MCF 10A (cell line): ENCODE measurements at regions of chr11 and their contacts with region 1.

Region 1: DNA sequence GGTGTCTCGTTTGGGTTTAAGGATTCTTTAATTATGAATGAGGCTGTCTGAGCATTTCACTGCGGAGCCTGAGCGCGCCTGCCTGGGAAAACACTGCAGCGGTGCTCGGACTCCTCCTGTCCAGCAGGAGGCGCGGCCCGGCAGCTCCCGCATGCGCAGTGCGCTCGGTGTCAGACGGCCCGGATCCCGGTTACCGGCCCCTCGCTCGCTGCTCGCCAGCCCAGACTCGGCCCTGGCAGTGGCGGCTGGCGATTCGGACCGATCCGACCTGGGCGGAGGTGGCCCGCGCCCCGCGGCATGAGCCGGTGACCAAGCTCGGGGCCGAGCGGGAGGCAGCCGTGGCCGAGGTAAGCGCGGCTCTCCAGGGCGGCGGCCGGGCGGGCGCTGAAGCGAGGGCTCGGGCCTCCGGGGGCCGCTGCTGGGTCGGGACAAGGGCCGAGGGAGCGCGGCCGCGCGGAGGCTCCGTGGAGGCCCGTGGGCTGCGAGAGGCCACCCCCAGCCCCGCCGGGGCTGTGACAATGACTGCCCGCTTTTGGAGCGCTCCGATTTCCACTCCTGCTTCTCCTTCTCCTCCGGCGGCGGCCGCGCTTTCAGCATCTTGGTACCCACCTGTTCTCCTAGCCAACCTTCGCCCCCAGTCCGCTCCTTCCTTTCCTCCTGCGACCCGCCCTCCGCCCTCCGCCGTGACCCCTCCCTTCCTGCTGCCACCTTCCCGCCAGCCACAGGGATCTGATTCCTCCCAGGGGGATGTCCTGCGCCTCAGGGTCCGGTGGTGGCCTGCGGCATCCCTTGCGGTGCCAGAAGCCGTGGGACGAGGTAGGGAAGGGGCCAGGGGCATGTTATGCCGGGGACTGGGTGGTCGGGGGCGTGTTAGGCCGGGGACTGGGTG is at the start of gene EXT2:
- DNase-seq: peak; percentile 81
- H3K4me3 Mint-ChIP-seq: peak within 1 kb of the TSS; percentile 82
- H3K27ac Mint-ChIP-seq: peak within 1 kb of the TSS; percentile 61
- H3K4me1 Mint-ChIP-seq: peaks cover 13% of the 10 kb centered on the region
- H3K27me3 Mint-ChIP-seq: no peaks in the 10 kb centered on the region
- CTCF ChIP-seq: peak; percentile 74
- total RNA-seq, gene EXT2: 73.1 and 82.7 TPM in 2 replicates

Region 2: GRCh38 chr11:43895601-43896000 is 200.1 kb before region 1 on chr11:
- CTCF ChIA-PET with region 1: interaction called, 20 read pairs
- POLR2A ChIA-PET with region 1: no interaction called
- intact Hi-C with region 1: loop called (anchors 1 kb)
- DNase-seq: no peak
- H3K4me3 Mint-ChIP-seq: no peak overlapping the region
- H3K27ac Mint-ChIP-seq: no peak overlapping the region
- H3K4me1 Mint-ChIP-seq: no peaks in the 10 kb centered on the region
- H3K27me3 Mint-ChIP-seq: no peaks in the 10 kb centered on the region
- CTCF ChIP-seq: no peak

Region 3: GRCh38 chr11:44083906-44084305 is 11.8 kb before region 1 on chr11:
- CTCF ChIA-PET with region 1: interaction called, 13 read pairs
- POLR2A ChIA-PET with region 1: no interaction called
- intact Hi-C with region 1: no loop called
- DNase-seq: no peak
- H3K4me3 Mint-ChIP-seq: no peak overlapping the region
- H3K27ac Mint-ChIP-seq: no peak overlapping the region
- H3K4me1 Mint-ChIP-seq: peaks cover 5% of the 10 kb centered on the region
- H3K27me3 Mint-ChIP-seq: peaks cover 1% of the 10 kb centered on the region
- CTCF ChIP-seq: no peak

Region 4: DNA sequence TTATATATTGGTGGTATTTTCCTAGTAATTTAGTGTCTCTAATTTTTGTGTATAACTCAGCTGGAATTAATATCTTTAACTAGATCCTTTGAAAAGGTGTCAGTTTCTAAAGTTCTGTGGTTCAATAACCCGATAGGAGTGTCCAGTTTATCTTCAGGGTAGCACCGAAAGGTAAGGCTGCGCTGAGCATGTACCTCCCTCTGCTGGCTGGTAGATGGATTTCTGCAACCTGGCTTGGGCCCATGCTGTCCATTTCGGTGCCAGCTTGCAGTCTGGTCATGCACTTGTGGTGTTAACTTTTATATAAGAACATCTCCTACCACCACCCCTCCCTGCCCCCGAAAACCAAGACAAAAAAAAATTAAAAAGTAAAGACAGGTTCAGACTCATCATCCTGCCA is 24.4 kb after region 1 on chr11:
- CTCF ChIA-PET with region 1: interaction called, 13 read pairs
- POLR2A ChIA-PET with region 1: no interaction called
- intact Hi-C with region 1: no loop called
- DNase-seq: peak; percentile 11
- H3K4me3 Mint-ChIP-seq: no peak overlapping the region
- H3K27ac Mint-ChIP-seq: no peak overlapping the region
- H3K4me1 Mint-ChIP-seq: no peaks in the 10 kb centered on the region
- H3K27me3 Mint-ChIP-seq: no peaks in the 10 kb centered on the region
- CTCF ChIP-seq: peak; percentile 27

Region 5: GRCh38 chr11:44538375-44539054 is 442.8 kb after region 1 on chr11:
- CTCF ChIA-PET with region 1: interaction called, 7 read pairs
- POLR2A ChIA-PET with region 1: no interaction called
- intact Hi-C with region 1: loop called (anchors 1 kb)
- DNase-seq: peak; percentile 71
- H3K4me3 Mint-ChIP-seq: no peak overlapping the region
- H3K27ac Mint-ChIP-seq: no peak overlapping the region
- H3K4me1 Mint-ChIP-seq: no peaks in the 10 kb centered on the region
- H3K27me3 Mint-ChIP-seq: peaks cover 10% of the 10 kb centered on the region
- CTCF ChIP-seq: peak; percentile 93